Posterior vena cava (tissue), 2 donors: ENCODE measurements at regions of chr11 and their contacts with region 1.

Region 1: DNA sequence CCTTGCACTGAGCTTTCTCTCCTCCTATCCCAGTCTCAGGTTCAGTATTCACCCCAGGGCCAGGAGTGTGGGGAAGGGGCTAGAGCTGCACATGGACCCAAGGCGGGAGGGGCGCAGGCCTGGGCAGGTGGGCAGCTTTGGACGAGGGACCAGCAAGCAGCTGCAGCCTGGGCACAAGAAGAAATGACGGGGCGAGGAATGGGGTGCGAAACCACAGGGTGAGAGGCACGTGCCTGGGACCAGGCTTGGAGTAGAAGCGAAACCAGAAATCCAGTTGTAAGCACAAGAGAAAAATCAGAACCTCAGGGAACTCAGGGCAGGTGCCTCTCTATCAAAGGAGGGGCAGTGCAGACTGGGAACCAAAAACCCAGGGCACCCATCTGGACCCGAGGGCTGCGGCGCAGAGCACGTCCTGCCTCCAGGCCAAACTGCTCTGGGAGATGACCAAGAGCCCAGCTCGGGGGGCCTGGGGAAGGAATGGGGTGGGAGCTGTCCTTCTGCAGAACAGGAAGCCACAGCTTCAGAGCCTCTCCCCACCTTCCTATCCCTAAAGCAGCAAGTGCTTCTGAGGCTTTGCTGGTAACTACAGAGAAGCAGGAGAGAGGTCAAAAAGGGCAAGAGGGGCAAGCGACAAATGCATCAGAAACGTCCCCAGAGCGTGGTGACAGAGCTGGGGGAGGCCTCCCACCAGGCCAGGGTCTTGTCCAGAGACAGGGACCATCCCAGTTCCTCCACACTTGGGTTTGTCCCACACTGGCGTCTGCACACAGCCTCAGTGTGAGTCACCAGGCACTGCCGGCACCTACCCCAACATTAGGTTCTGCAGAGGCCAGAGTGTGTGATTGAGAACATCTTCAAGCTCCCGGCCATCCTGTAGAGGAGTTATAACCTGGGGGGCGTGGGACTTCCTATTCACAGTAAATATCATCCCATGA is 18.3 kb upstream of the TMPRSS4 start:
- DNase-seq: peak; percentile 61

Region 2: DNA sequence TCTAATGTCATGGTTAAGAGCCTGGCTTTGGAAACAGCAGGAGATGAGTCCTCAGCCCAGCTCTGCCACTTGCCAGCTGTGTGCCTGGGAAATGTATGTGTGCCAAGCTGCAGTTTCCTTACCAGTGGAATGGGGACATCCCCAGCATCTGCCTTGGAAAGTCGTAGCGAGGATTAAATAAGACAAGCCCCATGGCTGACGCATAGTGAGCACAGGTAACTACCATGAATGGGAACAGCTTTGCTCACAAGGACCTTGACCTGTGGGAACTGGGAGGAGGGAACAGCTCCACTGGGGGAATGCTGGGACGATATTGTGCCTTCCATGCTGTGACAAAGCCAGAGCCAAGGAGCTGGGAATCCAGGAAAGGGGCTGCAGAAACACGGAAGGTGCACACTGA is 258.9 kb before region 1 on chr11:
- intact Hi-C with region 1: loop called in 1 of 2 experiments (anchors 5 kb)
- DNase-seq: no peak

Region 3: GRCh38 chr11:118076754-118077281 is 18.2 kb after region 1 on chr11 and contains the start of gene TMPRSS4:
- intact Hi-C with region 1: no loop called
- DNase-seq: no peak
- total RNA-seq, gene TMPRSS4: not detected